HEK293T (cell line): ENCODE measurements at regions of chr14 and their contacts with region 1.

Region 1: DNA sequence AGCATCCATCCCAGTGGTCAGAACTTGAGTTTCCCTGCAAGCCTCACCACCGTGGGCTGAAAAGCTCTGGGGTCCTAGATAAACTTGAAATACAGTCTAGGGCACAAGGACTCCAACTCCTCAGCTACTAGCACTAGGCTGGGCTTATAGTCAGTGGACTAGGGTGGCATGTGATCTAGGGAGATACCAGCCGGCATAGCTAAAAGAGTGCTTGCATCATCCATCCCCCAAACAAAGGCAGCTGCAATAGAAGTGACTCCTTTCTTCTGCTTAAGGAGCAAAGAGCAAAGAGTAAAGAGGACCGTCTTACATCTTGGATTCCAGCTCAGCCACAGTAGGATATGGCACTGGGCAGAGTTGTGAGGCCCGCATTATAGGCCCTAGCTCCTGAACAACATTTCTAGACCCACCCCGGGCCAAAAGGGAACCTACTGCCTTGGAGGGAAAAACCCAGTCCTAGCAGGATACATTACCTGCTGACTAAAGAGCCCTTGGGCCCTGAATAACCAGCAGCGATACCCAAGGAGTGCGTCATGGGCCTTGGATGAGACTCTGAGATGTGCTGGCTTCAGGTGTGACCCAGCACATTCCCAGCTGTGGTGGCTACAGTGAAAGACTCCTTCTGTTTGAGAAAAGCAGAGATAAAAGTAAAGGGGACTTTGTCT is 17.9 kb upstream of the SOS2 start:
- DNase-seq: no peak

Region 2: GRCh38 chr14:50148799-50149198 is 100.5 kb before region 1 on chr14:
- CTCF ChIA-PET with region 1: no interaction called
- POLR2A ChIA-PET with region 1: no interaction called
- DNase-seq: no peak

Region 3: DNA sequence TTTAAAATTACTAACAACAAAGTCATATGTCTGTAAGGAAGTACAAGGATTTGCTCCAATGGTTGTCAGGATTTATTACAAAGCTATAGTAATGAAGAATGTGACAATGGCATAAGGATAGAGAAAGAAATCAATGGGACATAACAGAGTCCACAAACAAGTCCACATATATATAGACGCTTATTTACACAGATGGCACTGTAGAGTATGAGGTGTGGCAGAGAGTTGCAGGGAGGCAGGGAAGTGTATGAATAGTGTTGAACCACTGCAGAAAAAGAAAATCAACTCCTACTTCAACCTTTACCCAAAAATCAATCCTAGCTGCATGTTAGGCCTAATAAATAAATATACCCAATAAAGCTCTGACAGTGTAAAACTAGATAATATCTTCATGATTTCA is 39.2 kb before region 1 on chr14:
- CTCF ChIA-PET with region 1: interaction called, 11 read pairs
- POLR2A ChIA-PET with region 1: no interaction called
- DNase-seq: no peak